ENCODE measurements at regions of chr5 and their contacts with region 1.

Region 1: DNA sequence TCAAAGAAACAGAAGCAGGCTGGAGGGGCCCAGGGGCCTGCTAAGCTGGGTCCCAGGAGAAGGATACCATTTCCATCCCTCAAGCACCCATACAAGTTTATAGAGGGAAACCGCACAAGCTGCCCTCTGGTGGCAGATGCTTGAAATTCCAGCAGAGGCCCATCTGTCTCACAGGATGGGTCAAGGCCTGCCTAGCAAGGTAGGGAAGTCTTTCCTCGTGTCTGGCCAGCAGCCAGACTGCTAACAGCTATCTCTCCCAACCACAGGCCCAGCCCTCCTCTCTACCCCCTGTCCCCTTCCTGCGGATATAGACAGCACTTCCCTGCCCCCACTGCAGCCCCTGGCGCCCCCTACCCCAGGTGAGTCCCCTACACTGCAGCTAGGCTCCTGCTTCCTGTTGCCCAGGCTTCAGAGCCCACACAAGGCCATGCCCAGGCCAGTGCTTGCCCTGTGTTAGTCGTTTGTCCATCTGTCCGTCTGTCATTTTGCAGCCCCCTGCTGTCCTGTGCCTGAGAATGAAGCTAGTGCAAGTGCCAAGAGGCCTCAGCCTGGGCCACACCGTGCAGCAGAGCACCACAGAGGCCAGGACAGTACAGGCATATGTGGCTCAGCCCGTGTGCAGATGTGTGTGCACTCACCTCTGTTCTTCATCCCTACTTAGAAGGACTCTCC is 26.2 kb downstream of the TCF7 start:
- DNase-seq: peak; percentile 81 to 92
- H3K4me3 ChIP-seq: no peak overlapping the region
- H3K27ac ChIP-seq: no peak overlapping the region
- H3K4me1 ChIP-seq: peaks cover 20% of the 10 kb centered on the region
- H3K27me3 ChIP-seq: no peaks in the 10 kb centered on the region
- CTCF ChIP-seq: peak; percentile 42 to 60 (median 45)
- POLR2A ChIP-seq: no peak

Region 2: GRCh38 chr5:132251220-132251725 is 1889.4 kb before region 1 on chr5:
- intact Hi-C with region 1: no loop called
- DNase-seq: peak in 1 of 2 donors; percentile 80
- H3K4me3 ChIP-seq: no peak overlapping the region
- H3K27ac ChIP-seq: no peak overlapping the region
- H3K4me1 ChIP-seq: peaks cover 23% of the 10 kb centered on the region
- H3K27me3 ChIP-seq: no peaks in the 10 kb centered on the region
- CTCF ChIP-seq: no peak
- POLR2A ChIP-seq: no peak

Region 3: GRCh38 chr5:134041570-134042411 is 98.9 kb before region 1 on chr5:
- intact Hi-C with region 1: loop called (anchors 5 kb)
- DNase-seq: no peak
- H3K4me3 ChIP-seq: no peak overlapping the region
- H3K27ac ChIP-seq: no peak overlapping the region
- H3K4me1 ChIP-seq: no peaks in the 10 kb centered on the region
- H3K27me3 ChIP-seq: no peaks in the 10 kb centered on the region
- CTCF ChIP-seq: no peak
- POLR2A ChIP-seq: no peak

Region 4: GRCh38 chr5:134304311-134304710 is 163.6 kb after region 1 on chr5:
- intact Hi-C with region 1: no loop called
- DNase-seq: no peak
- H3K4me3 ChIP-seq: no peak overlapping the region
- H3K27ac ChIP-seq: no peak overlapping the region
- H3K4me1 ChIP-seq: no peaks in the 10 kb centered on the region
- H3K27me3 ChIP-seq: no peaks in the 10 kb centered on the region
- CTCF ChIP-seq: no peak
- POLR2A ChIP-seq: no peak